ENCODE measurements at regions of chr6 and their contacts with region 1.

Region 1: GRCh38 chr6:107957909-107958688 is at the start of gene SEC63:
- DNase-seq: peak; percentile 95
- ATAC-seq: peak; percentile 97
- H3K4me3 Mint-ChIP-seq: peak within 1 kb of the TSS; percentile 98
- H3K27ac Mint-ChIP-seq: peak within 1 kb of the TSS; percentile 94
- H3K4me1 Mint-ChIP-seq: peaks cover 27% of the 10 kb centered on the region
- H3K27me3 Mint-ChIP-seq: no peaks in the 10 kb centered on the region
- CTCF ChIP-seq: no peak
- total RNA-seq, gene SEC63: 64.4 and 68.3 TPM in 2 replicates

Region 2: DNA sequence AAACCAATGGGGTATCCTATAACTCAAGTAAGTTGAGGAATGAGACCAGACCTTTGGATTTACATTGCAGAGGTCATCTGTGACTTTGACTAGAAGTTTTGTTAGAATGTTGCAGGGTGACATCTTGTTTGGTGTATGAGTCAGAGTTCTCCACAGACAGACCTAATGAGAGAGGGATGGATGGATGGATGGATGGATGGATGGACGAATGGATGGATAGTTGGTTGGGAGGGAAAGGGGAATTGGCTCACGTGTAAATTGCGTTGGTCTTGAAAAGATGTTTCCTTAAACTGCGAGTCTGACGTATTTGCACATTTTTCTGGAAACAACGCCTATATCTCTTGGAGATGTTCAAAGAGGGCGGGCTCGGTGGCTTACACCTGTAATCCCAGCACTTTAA is 931.1 kb before region 1 on chr6:
- CTCF ChIA-PET with region 1: no interaction called
- POLR2A ChIA-PET with region 1: no interaction called
- intact Hi-C with region 1: loop called (anchors 5 kb)
- DNase-seq: no peak
- ATAC-seq: no peak
- H3K4me3 Mint-ChIP-seq: no peak overlapping the region
- H3K27ac Mint-ChIP-seq: no peak overlapping the region
- H3K4me1 Mint-ChIP-seq: peaks cover 23% of the 10 kb centered on the region
- H3K27me3 Mint-ChIP-seq: no peaks in the 10 kb centered on the region
- CTCF ChIP-seq: no peak

Region 3: DNA sequence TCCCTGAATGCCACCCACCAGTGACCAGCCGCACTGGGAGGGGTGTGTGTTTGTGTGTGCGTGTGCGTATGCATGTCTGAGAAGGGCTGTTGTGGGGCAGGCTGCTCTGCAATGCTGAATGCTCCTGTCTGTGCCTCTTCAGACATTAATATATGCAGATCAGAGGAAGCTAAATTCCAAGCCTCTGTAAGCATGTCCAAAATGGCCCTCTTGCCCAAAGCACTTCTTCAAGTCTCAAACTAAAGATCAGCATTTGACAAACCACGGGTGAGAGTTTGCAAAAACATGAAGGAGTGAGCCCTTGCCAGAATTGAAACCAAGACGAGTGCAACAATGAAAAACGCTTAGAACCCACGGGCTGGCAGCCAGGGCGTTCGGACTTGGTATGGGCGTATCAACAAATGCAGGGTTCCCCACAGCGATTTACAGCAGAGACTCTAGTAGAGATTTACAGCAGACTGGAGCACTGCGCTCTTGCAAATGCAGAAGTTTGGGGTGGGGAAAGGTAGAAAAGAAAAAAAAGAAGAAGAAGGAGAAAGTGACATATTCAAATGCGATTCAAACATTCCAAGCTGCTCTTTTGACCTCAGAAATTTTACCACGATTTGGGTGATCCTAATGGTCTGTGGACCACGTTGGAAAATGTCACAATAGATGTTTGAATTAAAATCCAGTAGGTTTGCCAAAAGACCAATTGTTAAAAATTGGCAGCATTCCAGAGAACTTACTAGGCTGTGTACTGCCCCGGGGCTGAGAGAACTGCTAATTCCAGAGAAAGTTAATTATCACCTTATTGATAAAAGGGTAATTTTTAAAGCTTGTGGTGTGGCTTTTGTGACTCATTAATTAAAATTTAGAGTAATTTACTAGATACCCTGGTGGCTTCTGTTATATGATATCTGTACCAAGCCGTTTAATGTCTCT is 137.5 kb before region 1 on chr6:
- CTCF ChIA-PET with region 1: no interaction called
- POLR2A ChIA-PET with region 1: no interaction called
- intact Hi-C with region 1: loop called (anchors 5 kb)
- DNase-seq: no peak
- ATAC-seq: peak; percentile 23
- H3K4me3 Mint-ChIP-seq: peak overlapping the region; percentile 86
- H3K27ac Mint-ChIP-seq: peak overlapping the region; percentile 85
- H3K4me1 Mint-ChIP-seq: peaks cover 74% of the 10 kb centered on the region
- H3K27me3 Mint-ChIP-seq: no peaks in the 10 kb centered on the region
- CTCF ChIP-seq: no peak

Region 4: DNA sequence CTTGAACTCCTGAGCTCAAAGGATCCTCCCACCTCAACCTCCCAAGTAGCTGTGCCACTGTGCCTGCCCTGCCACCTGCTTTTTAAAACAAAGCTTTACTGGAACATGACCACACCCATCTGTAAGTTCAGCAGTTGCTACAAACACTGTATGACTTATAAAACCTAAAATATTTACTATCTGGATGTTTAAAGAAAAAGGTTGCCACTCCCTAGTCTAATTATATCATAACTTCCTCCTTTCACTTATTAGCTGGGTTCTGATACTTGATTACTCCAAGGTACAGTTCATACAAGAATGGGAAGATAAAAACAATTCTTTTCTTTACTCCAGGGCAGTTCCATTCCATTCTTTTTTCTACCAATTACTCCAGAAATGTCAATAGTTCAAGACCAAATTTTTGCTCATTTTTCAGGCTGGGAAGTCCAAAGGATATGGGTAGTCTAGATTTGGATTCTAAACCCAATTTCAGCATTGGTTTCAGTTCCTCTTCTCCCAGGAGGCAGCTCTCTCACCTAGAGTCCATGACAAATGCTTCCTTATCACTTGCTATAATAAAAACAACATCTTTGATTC is 63.2 kb before region 1 on chr6:
- CTCF ChIA-PET with region 1: no interaction called
- POLR2A ChIA-PET with region 1: interaction called, 5 read pairs
- intact Hi-C with region 1: loop called (anchors 5 kb)
- DNase-seq: no peak
- ATAC-seq: peak; percentile 75
- H3K4me3 Mint-ChIP-seq: peak overlapping the region; percentile 61
- H3K27ac Mint-ChIP-seq: peak overlapping the region; percentile 92
- H3K4me1 Mint-ChIP-seq: peaks cover 60% of the 10 kb centered on the region
- H3K27me3 Mint-ChIP-seq: no peaks in the 10 kb centered on the region
- CTCF ChIP-seq: no peak

Region 5: GRCh38 chr6:108294727-108295625 is 336.9 kb after region 1 on chr6 and contains the start of gene AFG1L:
- CTCF ChIA-PET with region 1: no interaction called
- POLR2A ChIA-PET with region 1: interaction called, 3 read pairs
- intact Hi-C with region 1: loop called (anchors 1 kb)
- DNase-seq: peak; percentile 89
- ATAC-seq: peak; percentile 92
- H3K4me3 Mint-ChIP-seq: peak within 1 kb of the TSS; percentile 99
- H3K27ac Mint-ChIP-seq: peak within 1 kb of the TSS; percentile 100
- H3K4me1 Mint-ChIP-seq: peaks cover 30% of the 10 kb centered on the region
- H3K27me3 Mint-ChIP-seq: no peaks in the 10 kb centered on the region
- CTCF ChIP-seq: no peak
- total RNA-seq, gene AFG1L: 7.5 and 10.3 TPM in 2 replicates

Measured in activated B cell treated with CpG ODN at 0.5 μM for 24 hours (primary cell).